Calu3 (cell line): ENCODE measurements at regions of chr11 and their contacts with region 1.

Region 1: DNA sequence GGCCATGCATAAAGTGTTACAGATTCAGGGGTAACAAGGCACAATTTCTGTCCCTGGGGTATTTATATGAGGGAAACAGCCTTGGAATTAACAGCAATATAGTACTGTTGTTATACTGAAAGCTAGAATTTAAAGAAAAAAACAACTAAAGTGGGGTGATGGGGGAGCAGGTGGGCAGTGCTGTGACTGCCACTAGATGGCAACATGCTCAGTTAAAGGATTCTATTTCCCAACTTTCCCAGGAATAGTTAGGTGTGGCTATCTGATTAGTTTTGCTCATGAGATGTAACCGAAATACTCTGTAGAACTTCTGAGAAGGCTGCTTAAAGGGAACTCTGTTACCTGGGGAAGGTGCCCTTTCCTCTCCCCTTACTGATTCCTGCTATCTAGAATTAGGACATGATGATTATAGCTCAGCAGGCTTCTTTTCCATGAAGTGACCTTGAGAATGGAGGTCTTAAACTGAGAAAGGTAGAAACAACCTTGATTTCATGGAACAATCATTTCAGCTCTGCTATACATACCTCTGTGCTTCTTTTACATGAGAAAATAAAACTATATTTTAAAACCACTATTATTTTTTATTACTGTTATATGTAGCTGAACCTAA is 102.6 kb downstream of the RELT start:
- DNase-seq: peak; percentile 20
- H3K4me3 Mint-ChIP-seq: no peak overlapping the region
- H3K27ac Mint-ChIP-seq: no peak overlapping the region
- H3K4me1 Mint-ChIP-seq: no peaks in the 10 kb centered on the region
- H3K27me3 Mint-ChIP-seq: no peaks in the 10 kb centered on the region
- CTCF ChIP-seq: peak; percentile 70

Region 2: GRCh38 chr11:73308961-73309919 is 169.6 kb before region 1 on chr11:
- CTCF ChIA-PET with region 1: no interaction called
- intact Hi-C with region 1: no loop called
- DNase-seq: peak; percentile 93
- H3K4me3 Mint-ChIP-seq: peak overlapping the region; percentile 73
- H3K27ac Mint-ChIP-seq: peak overlapping the region; percentile 44
- H3K4me1 Mint-ChIP-seq: peaks cover 25% of the 10 kb centered on the region
- H3K27me3 Mint-ChIP-seq: no peaks in the 10 kb centered on the region
- CTCF ChIP-seq: no peak

Region 3: GRCh38 chr11:73597956-73598718 is 119.3 kb after region 1 on chr11 and contains the start of gene FAM168A:
- CTCF ChIA-PET with region 1: interaction called, 3 read pairs
- intact Hi-C with region 1: loop called (anchors 5 kb)
- DNase-seq: peak; percentile 92
- H3K4me3 Mint-ChIP-seq: peak within 1 kb of the TSS; percentile 93
- H3K27ac Mint-ChIP-seq: peak within 1 kb of the TSS; percentile 83
- H3K4me1 Mint-ChIP-seq: peaks cover 22% of the 10 kb centered on the region
- H3K27me3 Mint-ChIP-seq: no peaks in the 10 kb centered on the region
- CTCF ChIP-seq: no peak
- total RNA-seq, gene FAM168A: 30.4 and 30.8 TPM in 2 replicates

Region 4: GRCh38 chr11:73625696-73626318 is 147.0 kb after region 1 on chr11:
- CTCF ChIA-PET with region 1: interaction called, 13 read pairs
- intact Hi-C with region 1: loop called (anchors 2 kb)
- DNase-seq: peak; percentile 84
- H3K4me3 Mint-ChIP-seq: peak overlapping the region; percentile 24
- H3K27ac Mint-ChIP-seq: no peak overlapping the region
- H3K4me1 Mint-ChIP-seq: no peaks in the 10 kb centered on the region
- H3K27me3 Mint-ChIP-seq: peaks cover 33% of the 10 kb centered on the region
- CTCF ChIP-seq: peak; percentile 78

Region 5: DNA sequence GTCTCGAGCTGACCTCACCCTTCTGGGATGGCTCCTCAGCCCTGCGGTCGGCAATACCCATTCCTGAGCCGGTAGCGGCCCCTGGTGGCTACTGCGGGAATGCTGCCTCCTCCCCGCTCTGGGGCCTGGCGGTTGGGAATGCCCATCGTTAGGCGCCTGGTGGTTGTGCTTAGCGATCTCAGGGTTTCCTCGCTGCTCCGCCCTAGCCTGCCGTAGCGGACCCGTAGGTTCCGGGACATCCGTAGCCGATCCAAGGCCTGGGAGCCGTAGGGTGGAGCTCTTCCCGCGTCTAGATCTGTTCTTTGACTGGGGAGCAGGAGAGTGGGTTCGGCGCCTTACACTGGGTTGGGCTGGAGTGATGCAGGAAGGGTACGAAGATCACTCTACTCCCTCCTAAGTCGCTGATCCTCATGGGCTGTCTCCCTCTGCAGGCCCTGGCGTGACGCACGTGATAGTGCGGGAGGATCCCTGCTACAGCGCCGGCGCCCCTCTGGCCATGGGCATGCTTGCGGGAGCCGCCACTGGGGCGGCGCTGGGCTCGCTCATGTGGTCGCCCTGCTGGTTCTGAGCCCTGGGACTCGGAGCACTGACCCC is 182.3 kb after region 1 on chr11:
- CTCF ChIA-PET with region 1: no interaction called
- intact Hi-C with region 1: loop called (anchors 5 kb)
- DNase-seq: peak; percentile 82
- H3K4me3 Mint-ChIP-seq: no peak overlapping the region
- H3K27ac Mint-ChIP-seq: no peak overlapping the region
- H3K4me1 Mint-ChIP-seq: peaks cover 23% of the 10 kb centered on the region
- H3K27me3 Mint-ChIP-seq: no peaks in the 10 kb centered on the region
- CTCF ChIP-seq: peak; percentile 80

Region 6: DNA sequence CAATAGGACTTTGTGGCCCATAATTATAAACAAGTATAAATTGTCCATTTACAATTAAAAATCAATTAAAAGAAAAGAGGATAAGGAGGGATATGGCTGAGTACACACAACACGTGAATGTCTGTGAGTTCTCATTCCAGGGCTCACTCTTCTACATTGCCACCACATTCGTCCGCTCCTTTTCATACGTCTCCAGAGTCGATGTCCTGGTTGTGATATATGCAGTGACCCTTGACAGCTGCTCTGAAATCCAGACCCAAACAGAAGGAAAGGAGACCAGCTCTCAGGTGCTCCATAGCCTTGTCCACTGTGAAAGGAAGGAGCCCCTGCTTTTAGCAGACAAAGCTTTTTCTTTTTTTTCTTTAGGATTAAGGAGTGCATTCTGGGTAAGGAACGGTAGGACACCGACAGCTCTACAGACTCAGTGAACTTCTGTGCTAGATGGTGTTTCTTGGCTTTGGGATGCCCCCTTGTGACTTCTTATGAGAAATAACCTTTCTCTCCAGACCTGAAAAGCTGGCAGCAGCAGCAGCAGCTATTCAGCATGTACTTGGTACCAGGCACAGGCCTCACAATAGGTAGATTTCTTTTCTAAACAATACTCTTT is 452.3 kb after region 1 on chr11:
- CTCF ChIA-PET with region 1: interaction called, 4 read pairs
- intact Hi-C with region 1: loop called (anchors 5 kb)
- DNase-seq: peak; percentile 42
- H3K4me3 Mint-ChIP-seq: no peak overlapping the region
- H3K27ac Mint-ChIP-seq: no peak overlapping the region
- H3K4me1 Mint-ChIP-seq: no peaks in the 10 kb centered on the region
- H3K27me3 Mint-ChIP-seq: no peaks in the 10 kb centered on the region
- CTCF ChIP-seq: peak; percentile 27